Caco-2 (cell line): ENCODE measurements at regions of chr11 and their contacts with region 1.

Region 1: GRCh38 chr11:16738193-16738946 is at the start of gene C11orf58:
- DNase-seq: peak; percentile 97 to 98
- H3K4me3 ChIP-seq: peak within 1 kb of the TSS; percentile 68
- H3K4me3 Mint-ChIP-seq: no peak within 1 kb of the TSS
- H3K27ac Mint-ChIP-seq: no peak within 1 kb of the TSS
- H3K4me1 ChIP-seq: peaks cover 4% of the 10 kb centered on the region; the same call in 1 of the 2 replicates
- H3K4me1 Mint-ChIP-seq: no peaks in the 10 kb centered on the region
- H3K27me3 ChIP-seq: no peaks in the 10 kb centered on the region
- H3K27me3 Mint-ChIP-seq: peaks cover 2% of the 10 kb centered on the region
- CTCF ChIP-seq: no peak
- total RNA-seq, gene C11orf58: 200 and 209 TPM in 2 replicates

Region 2: DNA sequence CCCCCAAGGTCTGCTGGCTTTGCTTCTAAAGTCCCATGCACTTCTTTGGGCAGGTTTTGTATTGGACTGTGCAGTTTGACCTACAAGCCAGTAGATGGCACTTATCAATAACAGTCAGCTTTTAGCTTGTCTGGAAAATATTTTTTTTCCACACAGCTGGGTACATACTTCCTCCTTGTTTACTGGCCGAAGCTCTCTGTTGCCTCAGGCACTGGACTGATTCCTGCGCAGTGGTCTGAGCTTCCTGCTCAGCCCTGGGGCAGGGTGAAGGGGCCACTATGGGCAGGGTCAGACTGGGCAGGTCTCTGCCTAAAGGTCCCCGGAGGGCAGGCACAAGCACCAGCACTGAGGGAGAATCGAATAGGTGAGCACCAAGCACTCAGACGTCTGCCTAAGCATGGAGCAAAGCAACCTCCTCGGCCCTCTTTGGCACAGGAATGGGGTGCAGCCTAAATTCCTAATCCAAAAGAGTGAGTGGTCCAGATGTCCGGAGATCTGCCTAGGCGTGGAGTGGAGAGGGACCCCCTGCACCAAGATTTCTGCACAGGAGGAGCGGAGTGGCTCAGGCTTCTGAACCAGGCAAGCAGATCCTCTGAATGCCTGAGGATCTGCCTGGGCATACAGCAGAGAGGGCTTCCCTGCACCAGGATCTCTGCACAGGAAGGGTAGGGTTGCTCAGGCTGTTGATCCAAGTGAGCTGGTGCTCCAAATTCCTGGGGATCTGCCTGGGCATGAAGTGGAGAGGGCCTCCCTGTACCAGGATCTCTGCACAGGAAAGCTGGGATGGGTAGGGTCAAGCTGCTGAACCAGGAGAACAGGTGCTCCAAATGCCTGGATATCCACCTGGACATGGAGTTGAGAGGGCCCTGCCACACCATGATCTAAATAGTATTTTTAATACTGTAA is 105.8 kb before region 1 on chr11:
- CTCF ChIA-PET with region 1: interaction called, 3 read pairs
- POLR2A ChIA-PET with region 1: no interaction called
- intact Hi-C with region 1: loop called (anchors 2 kb)
- DNase-seq: peak in 1 of 2 experiments; percentile 37
- H3K4me3 ChIP-seq: no peak overlapping the region
- H3K4me3 Mint-ChIP-seq: no peak overlapping the region
- H3K27ac Mint-ChIP-seq: no peak overlapping the region
- H3K4me1 ChIP-seq: no peaks in the 10 kb centered on the region
- H3K4me1 Mint-ChIP-seq: no peaks in the 10 kb centered on the region
- H3K27me3 ChIP-seq: no peaks in the 10 kb centered on the region
- H3K27me3 Mint-ChIP-seq: peaks cover 12% of the 10 kb centered on the region
- CTCF ChIP-seq: peak; percentile 40 to 57